Activated CD4-positive, alpha-beta memory T cell treated with anti-CD3 and anti-CD28 coated beads for 36 hours (primary cell): ENCODE measurements at regions of chr9 and their contacts with region 1.

Region 1: GRCh38 chr9:94603259-94604160 is 9.9 kb upstream of the FBP2 start:
- DNase-seq: peak; percentile 85
- H3K4me3 Mint-ChIP-seq: no peak overlapping the region
- H3K27ac Mint-ChIP-seq: no peak overlapping the region
- H3K4me1 Mint-ChIP-seq: peaks cover 6% of the 10 kb centered on the region
- H3K27me3 Mint-ChIP-seq: peaks cover 3% of the 10 kb centered on the region

Region 2: GRCh38 chr9:94554439-94555391 is 48.8 kb before region 1 on chr9 and contains the start of gene PCAT7:
- CTCF ChIA-PET with region 1: interaction called, 8 read pairs
- POLR2A ChIA-PET with region 1: interaction called, 4 read pairs
- intact Hi-C with region 1: loop called (anchors 1 kb)
- DNase-seq: peak; percentile 61
- H3K4me3 Mint-ChIP-seq: no peak within 1 kb of the TSS
- H3K27ac Mint-ChIP-seq: no peak within 1 kb of the TSS
- H3K4me1 Mint-ChIP-seq: no peaks in the 10 kb centered on the region
- H3K27me3 Mint-ChIP-seq: peaks cover 6% of the 10 kb centered on the region
- total RNA-seq, gene PCAT7: not detected